Heart right ventricle (tissue), 16 donors: ENCODE measurements at regions of chr7 and their contacts with region 1.

Region 1: DNA sequence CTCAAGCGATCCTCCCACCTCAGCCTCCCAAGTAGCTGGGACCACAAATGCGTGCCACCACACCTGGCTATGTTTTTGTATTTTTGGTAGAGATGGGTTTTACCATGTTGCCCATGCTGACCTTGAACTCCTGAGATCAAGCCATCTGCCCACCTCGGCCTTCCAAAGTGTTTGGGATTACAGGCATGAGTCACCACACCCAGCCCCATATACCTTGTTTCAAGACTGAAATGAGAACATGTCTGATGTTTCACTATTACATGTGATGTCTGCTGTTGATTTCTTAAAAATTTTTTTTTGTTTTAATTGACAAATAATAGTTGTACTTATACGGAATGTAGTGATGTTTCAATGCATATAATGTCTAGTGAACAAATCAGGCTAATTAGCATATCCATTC is 14.5 kb downstream of the KLHL7 start:
- DNase-seq: no peak
- ATAC-seq: no peak
- H3K4me3 ChIP-seq: no peak overlapping the region
- H3K27ac ChIP-seq: peak overlapping the region in 6 of 10 donors; percentile 2 to 75 (median 13)
- H3K4me1 ChIP-seq: peaks cover 2 to 81% (median 55%) of the 10 kb centered on the region in 9 donors
- H3K27me3 ChIP-seq: no peaks in the 10 kb centered on the region
- CTCF ChIP-seq: no peak

Region 2: DNA sequence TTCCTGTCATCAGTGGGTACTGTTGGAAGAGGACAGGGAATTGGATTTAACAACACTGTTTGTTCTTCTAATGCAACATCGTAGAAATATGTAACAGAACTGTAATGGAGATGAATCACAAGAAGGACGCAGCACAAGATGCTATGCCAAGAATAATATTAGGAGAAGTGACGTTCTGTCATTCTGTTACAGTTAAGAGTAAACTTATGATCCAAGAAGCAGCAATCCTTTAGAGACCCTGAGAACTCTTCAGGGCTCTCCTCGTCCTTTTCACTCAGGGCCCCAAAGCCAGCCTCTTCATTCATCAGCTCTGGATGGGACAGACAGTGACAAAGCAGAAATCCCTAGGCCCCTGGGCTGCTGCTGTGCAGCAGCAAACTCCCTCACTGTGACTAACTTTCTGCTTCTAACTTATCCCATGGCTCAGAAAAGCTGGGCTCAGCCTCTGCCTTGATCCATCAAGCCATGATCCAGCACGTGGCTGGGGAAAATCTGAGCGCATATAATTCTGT is 401.9 kb before region 1 on chr7:
- intact Hi-C with region 1: no loop called
- DNase-seq: no peak
- ATAC-seq: peak; percentile 39 to 77 (median 56)
- H3K4me3 ChIP-seq: no peak overlapping the region
- H3K27ac ChIP-seq: peak overlapping the region in 8 of 10 donors; percentile 4 to 78 (median 56)
- H3K4me1 ChIP-seq: peaks cover 0 to 51% (median 24%) of the 10 kb centered on the region in 9 donors
- H3K27me3 ChIP-seq: no peaks in the 10 kb centered on the region
- CTCF ChIP-seq: no peak

Region 3: GRCh38 chr7:23168111-23168885 is 48.2 kb after region 1 on chr7:
- intact Hi-C with region 1: loop called in 1 of 10 experiments (anchors 5 kb)
- DNase-seq: no peak
- ATAC-seq: peak in 7 of 8 donors; percentile 67 to 90 (median 81)
- H3K4me3 ChIP-seq: no peak overlapping the region
- H3K27ac ChIP-seq: peak overlapping the region in 8 of 10 donors; percentile 31 to 75 (median 66)
- H3K4me1 ChIP-seq: peaks cover 0 to 18% (median 0%) of the 10 kb centered on the region in 9 donors
- H3K27me3 ChIP-seq: no peaks in the 10 kb centered on the region
- CTCF ChIP-seq: no peak

Region 4: GRCh38 chr7:23216021-23216420 is 95.9 kb after region 1 on chr7:
- intact Hi-C with region 1: no loop called
- DNase-seq: peak; percentile 19 to 35
- ATAC-seq: peak in 7 of 8 donors; percentile 71 to 87 (median 86)
- H3K4me3 ChIP-seq: no peak overlapping the region
- H3K27ac ChIP-seq: peak overlapping the region in 1 of 10 donors; percentile 74
- H3K4me1 ChIP-seq: peaks cover 0 to 14% (median 0%) of the 10 kb centered on the region in 9 donors
- H3K27me3 ChIP-seq: no peaks in the 10 kb centered on the region
- CTCF ChIP-seq: no peak